Cardiac septum (tissue), 1 donor: ENCODE measurements at regions of chr13 and their contacts with region 1.

Region 1: GRCh38 chr13:110108347-110109174 is 198.4 kb downstream of the COL4A1 start:
- DNase-seq: peak; percentile 87

Region 2: GRCh38 chr13:108961542-108962125 is 1146.9 kb before region 1 on chr13:
- intact Hi-C with region 1: loop called (anchors 5 kb)
- DNase-seq: no peak

Region 3: GRCh38 chr13:109145631-109146030 is 962.9 kb before region 1 on chr13:
- intact Hi-C with region 1: loop called (anchors 5 kb)
- DNase-seq: no peak

Region 4: GRCh38 chr13:109869312-109870237 is 239.0 kb before region 1 on chr13:
- intact Hi-C with region 1: loop called (anchors 5 kb)
- DNase-seq: peak; percentile 87

Region 5: DNA sequence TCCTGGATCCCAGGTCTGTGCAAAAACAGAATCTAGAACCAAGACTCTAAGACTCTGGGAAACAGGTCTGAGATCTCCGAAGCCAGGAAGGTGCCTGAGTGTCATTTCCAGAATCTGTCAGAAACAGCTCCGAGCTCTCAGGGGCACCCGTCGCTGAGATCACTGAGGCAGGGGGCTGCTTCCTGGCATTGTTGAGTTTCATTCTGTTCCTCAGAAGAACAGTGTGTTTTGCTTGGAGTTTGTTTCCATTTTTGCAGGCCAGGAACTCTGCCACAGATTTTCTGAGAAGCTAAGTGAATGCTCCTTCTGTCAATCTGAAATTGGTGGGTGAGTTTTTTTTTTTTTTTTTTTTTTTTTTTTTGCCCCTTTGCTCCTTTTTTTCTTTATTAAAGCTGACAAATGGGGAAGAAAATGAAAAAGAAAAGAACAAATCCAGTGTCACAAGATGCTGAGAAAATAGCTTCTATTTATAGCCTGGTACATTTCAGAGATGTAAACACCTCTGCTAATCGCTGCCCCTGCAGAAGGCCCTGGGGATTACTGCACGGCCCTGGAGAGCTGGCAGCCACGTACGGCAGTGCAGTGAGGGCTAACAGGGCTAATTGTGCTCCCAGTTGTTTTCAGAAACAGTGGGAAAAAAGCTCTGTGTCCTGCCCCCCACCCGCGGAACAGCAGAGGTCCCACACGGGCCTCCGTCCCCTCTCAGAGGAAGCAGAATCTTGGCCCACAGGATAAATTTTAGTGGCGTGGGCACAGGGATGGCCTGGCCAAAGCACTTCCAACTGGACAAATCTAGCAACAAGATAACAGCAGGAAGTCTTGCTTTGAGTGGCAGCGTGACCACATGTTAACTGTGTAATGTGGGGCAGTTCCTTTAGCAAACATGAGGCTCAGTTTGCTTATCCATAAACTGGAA is 84.6 kb before region 1 on chr13:
- intact Hi-C with region 1: loop called (anchors 5 kb)
- DNase-seq: no peak

Region 6: DNA sequence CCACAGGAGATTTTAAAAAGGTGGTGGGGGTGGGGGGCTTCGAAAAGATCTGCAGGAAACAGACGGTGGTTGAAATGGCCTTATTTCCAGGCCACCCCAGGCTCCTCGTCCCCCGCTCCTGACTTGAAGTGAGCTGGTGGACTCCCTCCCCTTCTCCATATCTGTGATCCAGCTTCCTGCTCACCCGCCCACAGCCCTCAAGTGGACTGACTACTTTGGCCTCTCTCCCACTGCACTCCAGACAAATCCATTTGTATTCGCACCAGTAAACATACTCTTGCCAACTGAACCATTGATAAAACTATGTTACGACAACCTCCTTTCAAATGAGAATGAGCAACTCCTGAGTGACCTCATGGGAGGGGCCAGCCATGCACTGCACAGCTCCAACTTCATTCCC is 61.1 kb before region 1 on chr13:
- intact Hi-C with region 1: loop called (anchors 5 kb)
- DNase-seq: peak; percentile 86

Region 7: DNA sequence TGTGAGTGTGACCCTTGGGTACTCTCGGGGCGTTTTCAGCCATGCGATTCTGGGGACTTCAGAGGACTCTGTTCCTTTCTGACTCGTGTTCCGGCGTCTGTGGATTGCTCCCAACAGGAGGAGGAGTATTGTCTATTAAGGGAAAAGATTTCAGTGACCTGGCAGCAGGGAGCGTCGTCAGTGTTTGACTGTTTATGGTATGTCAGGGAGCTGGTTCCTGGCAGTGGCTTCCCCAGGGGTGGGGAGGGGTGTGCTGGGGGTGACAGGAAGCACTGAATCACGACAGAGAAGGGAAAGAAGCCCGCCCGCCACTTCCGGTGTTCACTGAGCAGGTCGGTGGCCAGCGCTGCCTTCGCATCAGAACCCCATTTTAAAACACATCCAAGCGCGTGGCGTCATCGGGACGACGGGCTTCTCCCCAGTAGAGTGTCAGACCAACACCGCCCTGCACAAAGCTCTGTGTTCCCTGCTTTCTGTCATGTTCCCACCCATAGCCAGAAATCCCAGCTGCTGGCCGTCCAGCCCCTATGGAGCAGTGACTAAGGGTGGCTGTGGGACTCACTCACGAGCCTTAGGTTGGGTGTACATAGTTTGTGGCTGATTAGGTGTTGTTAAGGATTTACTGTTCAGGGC is 232.4 kb after region 1 on chr13:
- intact Hi-C with region 1: no loop called
- DNase-seq: peak; percentile 91